Activated CD4-positive, alpha-beta T cell treated with anti-CD3 and anti-CD28 coated beads, Interleukin-2, amount 10 ng/mL, durations not matched to agents 24 days and 14 days (primary cell): ENCODE measurements at regions of chrX and their contacts with region 1.

Region 1: DNA sequence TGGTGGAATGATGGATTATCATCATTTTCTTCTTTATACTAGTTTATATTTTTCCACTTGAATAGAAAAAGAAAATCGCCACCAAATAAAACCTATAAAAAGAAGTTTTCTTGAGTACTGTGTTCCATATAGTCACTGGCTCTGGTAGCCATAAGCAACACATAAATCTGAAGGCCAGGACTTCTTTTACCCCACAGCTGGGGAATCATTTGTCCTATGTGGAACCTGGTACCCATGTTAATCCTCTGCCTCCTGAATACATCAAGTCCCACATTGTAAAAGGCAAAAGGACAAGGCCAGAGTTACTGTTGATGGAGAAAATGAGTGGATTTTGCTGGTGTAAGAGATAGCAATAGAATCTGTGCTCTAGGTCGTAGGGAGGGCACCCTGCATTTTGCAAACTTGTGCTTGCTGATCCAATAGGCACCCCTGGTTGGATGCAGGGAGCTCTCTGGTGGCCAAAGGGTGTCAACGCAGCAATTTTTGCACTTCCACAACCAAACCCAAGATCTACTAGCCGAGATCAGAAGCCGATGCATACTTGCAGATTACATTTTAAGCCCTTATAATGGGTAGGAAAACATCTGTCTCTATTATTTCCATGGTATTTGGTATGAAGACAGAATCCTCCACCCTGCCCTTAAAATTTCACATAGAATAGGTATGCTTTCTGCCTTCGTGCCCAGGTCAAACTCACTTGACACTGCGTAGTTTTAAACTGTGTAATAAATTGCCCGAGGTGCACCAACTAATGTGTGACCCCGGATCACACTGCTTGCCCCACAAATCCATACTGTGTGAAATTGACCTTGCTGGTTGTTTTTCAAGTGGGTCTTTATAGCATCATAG is 146.2 kb upstream of the SCML1 start:
- DNase-seq: peak; percentile 71
- H3K4me3 Mint-ChIP-seq: peak overlapping the region; percentile 45
- H3K27ac Mint-ChIP-seq: peak overlapping the region; percentile 60
- H3K4me1 Mint-ChIP-seq: peaks cover 15% of the 10 kb centered on the region
- H3K27me3 Mint-ChIP-seq: peaks cover 2% of the 10 kb centered on the region

Region 2: GRCh38 chrX:17242470-17242869 is 348.6 kb before region 1 on chrX:
- intact Hi-C with region 1: loop called (anchors 1 kb)
- DNase-seq: peak; percentile 67
- H3K4me3 Mint-ChIP-seq: no peak overlapping the region
- H3K27ac Mint-ChIP-seq: no peak overlapping the region
- H3K4me1 Mint-ChIP-seq: no peaks in the 10 kb centered on the region
- H3K27me3 Mint-ChIP-seq: no peaks in the 10 kb centered on the region

Region 3: GRCh38 chrX:17535229-17535628 is 55.9 kb before region 1 on chrX:
- intact Hi-C with region 1: loop called (anchors 1 kb)
- DNase-seq: peak; percentile 77
- H3K4me3 Mint-ChIP-seq: no peak overlapping the region
- H3K27ac Mint-ChIP-seq: no peak overlapping the region
- H3K4me1 Mint-ChIP-seq: peaks cover 7% of the 10 kb centered on the region
- H3K27me3 Mint-ChIP-seq: peaks cover 2% of the 10 kb centered on the region

Region 4: GRCh38 chrX:17605676-17606075 is 14.6 kb after region 1 on chrX:
- intact Hi-C with region 1: no loop called
- DNase-seq: no peak
- H3K4me3 Mint-ChIP-seq: no peak overlapping the region
- H3K27ac Mint-ChIP-seq: no peak overlapping the region
- H3K4me1 Mint-ChIP-seq: no peaks in the 10 kb centered on the region
- H3K27me3 Mint-ChIP-seq: no peaks in the 10 kb centered on the region

Region 5: GRCh38 chrX:17682259-17682658 is 91.1 kb after region 1 on chrX:
- intact Hi-C with region 1: loop called (anchors 2 kb)
- DNase-seq: no peak
- H3K4me3 Mint-ChIP-seq: peak overlapping the region; percentile 43
- H3K27ac Mint-ChIP-seq: peak overlapping the region; percentile 70
- H3K4me1 Mint-ChIP-seq: peaks cover 21% of the 10 kb centered on the region
- H3K27me3 Mint-ChIP-seq: no peaks in the 10 kb centered on the region